Ovary (tissue), 10 donors: ENCODE measurements at regions of chr12 and their contacts with region 1.

Region 1: DNA sequence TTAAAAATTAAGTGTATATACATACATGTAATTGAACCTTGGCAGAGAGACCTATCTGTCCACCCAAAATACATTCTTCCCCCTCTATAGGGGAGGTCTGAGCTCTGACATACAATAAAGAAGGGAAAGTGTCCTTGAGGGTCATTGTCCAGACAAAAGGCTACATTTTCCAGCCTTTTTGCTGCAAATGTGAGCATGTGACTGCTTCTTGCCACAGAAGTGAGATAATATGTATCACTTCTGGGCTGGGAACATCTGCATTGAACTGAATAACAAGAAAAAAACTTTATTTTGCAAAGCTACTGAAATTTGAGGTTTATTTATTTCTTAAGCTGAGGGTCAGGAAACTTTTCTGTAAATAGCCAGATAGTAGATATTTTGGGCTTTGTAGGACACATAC is 131.3 kb downstream of the TBC1D30 start:
- DNase-seq: no peak
- H3K4me3 ChIP-seq: no peak overlapping the region
- H3K27ac ChIP-seq: no peak overlapping the region
- H3K4me1 ChIP-seq: no peaks in the 10 kb centered on the region
- H3K27me3 ChIP-seq: no peaks in the 10 kb centered on the region
- CTCF ChIP-seq: no peak
- EP300 ChIP-seq: no peak
- POLR2A ChIP-seq: no peak

Region 2: DNA sequence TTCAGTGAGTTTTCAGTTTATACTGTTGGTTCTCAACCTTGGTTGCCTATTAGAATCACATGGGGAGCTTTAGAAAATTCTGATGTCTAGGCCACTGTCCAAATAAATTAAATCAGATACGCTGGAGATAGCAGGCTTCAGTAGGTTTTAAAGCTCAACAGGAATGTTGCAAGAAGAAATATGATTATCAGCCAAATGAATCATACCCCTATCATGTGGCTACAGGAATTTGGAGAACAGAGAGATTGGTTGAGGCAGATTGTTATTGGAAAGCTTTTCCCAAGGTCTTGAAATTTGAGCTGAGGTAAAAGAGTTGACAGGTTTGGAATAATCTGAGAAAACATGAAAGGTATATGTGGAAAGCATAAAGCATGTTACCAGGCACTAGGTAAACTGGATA is 40.1 kb after region 1 on chr12:
- intact Hi-C with region 1: loop called in 1 of 4 experiments (anchors 2 kb)
- DNase-seq: no peak
- H3K4me3 ChIP-seq: no peak overlapping the region
- H3K27ac ChIP-seq: no peak overlapping the region
- H3K4me1 ChIP-seq: no peaks in the 10 kb centered on the region
- H3K27me3 ChIP-seq: no peaks in the 10 kb centered on the region
- CTCF ChIP-seq: no peak
- EP300 ChIP-seq: no peak
- POLR2A ChIP-seq: no peak